ENCODE measurements at regions of chr4 and their contacts with region 1.

Region 1: GRCh38 chr4:67674096-67674495 is 26.9 kb downstream of the UBA6 start:
- DNase-seq: peak in 1 of 2 experiments; percentile 41
- H3K4me3 ChIP-seq: no peak overlapping the region
- H3K4me3 Mint-ChIP-seq: no peak overlapping the region
- H3K27ac Mint-ChIP-seq: no peak overlapping the region
- H3K4me1 ChIP-seq: no peaks in the 10 kb centered on the region
- H3K4me1 Mint-ChIP-seq: no peaks in the 10 kb centered on the region
- H3K27me3 ChIP-seq: no peaks in the 10 kb centered on the region
- H3K27me3 Mint-ChIP-seq: no peaks in the 10 kb centered on the region
- CTCF ChIP-seq: no peak

Region 2: DNA sequence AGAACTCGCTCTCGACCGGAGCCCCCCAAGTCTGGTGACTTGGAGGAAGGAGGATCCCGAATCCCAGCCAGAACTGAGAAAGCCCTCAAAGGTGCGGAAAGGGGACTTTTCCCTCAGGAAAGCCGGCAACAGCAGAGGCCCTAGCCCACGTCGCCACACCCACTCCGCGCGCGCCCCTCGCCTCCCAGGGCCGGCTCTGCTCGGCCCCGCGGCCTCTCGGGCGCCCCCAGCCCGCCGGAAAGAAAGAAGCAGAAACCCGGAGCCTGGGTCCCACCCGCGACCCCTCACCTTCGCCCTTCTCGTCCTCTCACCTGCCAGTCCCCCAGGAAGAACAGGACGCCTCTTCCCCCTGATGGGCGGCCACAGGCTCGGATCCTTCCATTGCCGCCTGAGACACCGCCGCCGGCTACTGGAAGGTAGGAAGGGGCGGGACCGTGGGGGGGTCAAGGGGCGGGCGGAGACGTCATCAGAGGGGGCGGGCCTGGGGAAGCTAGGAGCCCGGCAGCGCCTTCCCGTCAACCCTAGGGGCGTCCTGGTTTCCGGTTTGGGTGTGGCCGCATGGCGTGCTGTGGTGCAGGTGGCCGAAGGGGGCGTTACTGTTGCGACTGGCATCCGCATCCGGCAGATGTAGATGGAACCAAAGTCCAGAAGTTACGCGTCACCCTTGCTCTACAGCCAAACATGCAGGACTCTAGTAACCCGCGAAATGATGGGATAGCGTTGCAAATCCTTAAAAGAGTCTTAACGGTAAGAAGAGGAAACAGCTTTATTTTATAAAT is 26.8 kb after region 1 on chr4 and contains the start of gene UBA6:
- CTCF ChIA-PET with region 1: no interaction called
- POLR2A ChIA-PET with region 1: no interaction called
- intact Hi-C with region 1: loop called (anchors 1 kb)
- DNase-seq: peak; percentile 97 to 98
- H3K4me3 ChIP-seq: peak within 1 kb of the TSS; percentile 60
- H3K4me3 Mint-ChIP-seq: peak within 1 kb of the TSS; percentile 90
- H3K27ac Mint-ChIP-seq: peak within 1 kb of the TSS; percentile 94
- H3K4me1 ChIP-seq: 0 out of 2 replicates have a peak, but pooled peaks cover 4% of the 10 kb centered on the region
- H3K4me1 Mint-ChIP-seq: peaks cover 12% of the 10 kb centered on the region
- H3K27me3 ChIP-seq: no peaks in the 10 kb centered on the region
- H3K27me3 Mint-ChIP-seq: no peaks in the 10 kb centered on the region
- CTCF ChIP-seq: peak in 1 of 2 experiments; percentile 27
- total RNA-seq, gene UBA6: 74.6 and 77.7 TPM in 2 replicates

Region 3: GRCh38 chr4:68984947-68985346 is 1310.9 kb after region 1 on chr4:
- CTCF ChIA-PET with region 1: no interaction called
- POLR2A ChIA-PET with region 1: no interaction called
- intact Hi-C with region 1: no loop called
- DNase-seq: no peak
- H3K4me3 ChIP-seq: no peak overlapping the region
- H3K4me3 Mint-ChIP-seq: no peak overlapping the region
- H3K27ac Mint-ChIP-seq: no peak overlapping the region
- H3K4me1 ChIP-seq: no peaks in the 10 kb centered on the region
- H3K4me1 Mint-ChIP-seq: no peaks in the 10 kb centered on the region
- H3K27me3 ChIP-seq: no peaks in the 10 kb centered on the region
- H3K27me3 Mint-ChIP-seq: no peaks in the 10 kb centered on the region
- CTCF ChIP-seq: no peak

Measured in Caco-2 (cell line).